ENCODE measurements at regions of chr1 and their contacts with region 1.

Region 1: GRCh38 chr1:36385410-36386257 is at the start of gene STK40:
- DNase-seq: peak; percentile 88
- ATAC-seq: peak; percentile 83
- H3K4me3 Mint-ChIP-seq: peak within 1 kb of the TSS; percentile 91
- H3K27ac Mint-ChIP-seq: peak within 1 kb of the TSS; percentile 100
- H3K4me1 Mint-ChIP-seq: peaks cover 88% of the 10 kb centered on the region
- H3K27me3 Mint-ChIP-seq: no peaks in the 10 kb centered on the region
- CTCF ChIP-seq: no peak
- total RNA-seq, gene STK40: 62.7 and 63.7 TPM in 2 replicates

Region 2: DNA sequence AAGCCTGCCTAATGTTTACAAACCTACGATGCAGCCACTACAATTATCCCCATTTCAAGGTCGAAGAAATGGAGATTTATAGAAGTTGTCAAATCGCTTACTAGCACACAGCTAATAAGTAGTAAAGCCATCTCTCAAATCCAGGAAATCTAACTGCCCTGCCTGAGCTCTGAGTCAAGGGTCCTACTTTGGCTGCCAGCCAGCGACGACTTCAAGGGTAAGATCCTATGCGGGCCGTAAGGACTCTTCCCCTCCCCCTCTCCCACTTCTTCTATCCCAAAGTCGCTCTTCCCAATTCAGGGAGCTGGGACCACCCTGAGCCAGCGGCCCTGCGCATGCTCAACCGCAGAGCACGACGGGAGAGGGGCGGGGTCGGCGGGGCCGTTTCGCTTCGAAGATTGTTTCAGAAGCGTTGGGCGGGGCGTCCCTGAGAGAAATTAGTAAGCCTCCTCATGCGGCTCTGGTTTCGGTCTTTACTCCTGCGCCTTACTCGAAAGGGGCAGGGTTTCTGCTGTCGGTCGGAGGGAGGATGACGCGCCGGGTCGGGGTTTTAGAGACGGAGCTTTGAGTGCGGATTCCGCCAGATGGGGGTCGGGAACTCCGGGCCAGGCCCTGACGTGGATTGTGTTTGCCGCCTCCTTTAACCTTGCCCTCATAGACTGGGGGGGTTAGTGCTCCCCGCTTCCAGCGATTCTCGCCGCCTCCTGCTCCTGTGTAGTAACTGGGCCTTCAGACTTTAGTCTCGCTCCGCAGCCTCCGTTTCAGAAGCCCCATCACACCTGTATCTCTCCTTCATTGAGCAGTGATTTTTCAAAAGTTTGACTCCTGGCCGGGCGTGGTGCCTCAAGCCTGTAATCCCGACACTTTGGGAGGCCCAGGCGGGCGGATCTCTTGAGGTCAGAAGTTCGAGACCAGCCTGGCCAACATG is 1306.4 kb before region 1 on chr1 and contains the start of gene ZMYM1:
- CTCF ChIA-PET with region 1: no interaction called
- POLR2A ChIA-PET with region 1: no interaction called
- intact Hi-C with region 1: loop called (anchors 5 kb)
- DNase-seq: peak; percentile 88
- ATAC-seq: peak; percentile 96
- H3K4me3 Mint-ChIP-seq: peak within 1 kb of the TSS; percentile 95
- H3K27ac Mint-ChIP-seq: peak within 1 kb of the TSS; percentile 98
- H3K4me1 Mint-ChIP-seq: peaks cover 21% of the 10 kb centered on the region
- H3K27me3 Mint-ChIP-seq: peaks cover 4% of the 10 kb centered on the region
- CTCF ChIP-seq: no peak
- total RNA-seq, gene ZMYM1: 7.4 and 9.0 TPM in 2 replicates

Region 3: DNA sequence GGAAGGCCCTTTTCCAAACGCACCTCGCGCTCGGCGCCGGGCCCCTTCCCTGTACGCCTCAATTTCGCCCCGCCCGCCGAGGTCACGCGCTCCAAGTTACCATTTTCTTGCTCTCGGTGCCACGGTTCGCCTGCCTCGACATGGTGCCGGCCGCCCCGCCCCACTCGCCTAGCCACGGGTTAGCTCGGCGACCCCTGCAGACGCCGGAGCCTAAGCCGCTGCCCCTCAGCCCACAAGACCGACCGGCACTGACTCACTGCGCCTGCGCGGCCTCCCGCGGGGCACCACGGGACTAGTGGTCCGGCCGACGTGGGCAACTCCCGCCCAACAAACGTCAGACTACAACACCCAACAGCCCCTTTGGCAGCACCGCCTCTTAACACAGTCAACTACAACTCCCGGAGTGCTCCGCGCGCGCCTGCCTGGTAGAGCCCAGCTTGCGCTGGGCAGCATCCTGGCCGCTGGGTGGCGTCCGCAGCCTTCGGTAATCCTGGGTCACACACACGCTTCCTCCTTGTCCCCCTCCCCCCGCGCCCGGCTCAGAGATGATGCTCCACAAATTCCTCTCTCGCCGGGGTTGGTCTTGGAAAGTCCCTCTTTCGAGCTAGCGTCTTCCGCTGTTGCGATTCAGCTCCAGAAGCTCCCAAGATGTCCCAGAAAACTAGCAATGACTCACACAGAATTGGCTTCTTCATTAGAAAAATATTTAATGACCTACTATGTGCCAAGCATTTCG is 236.2 kb before region 1 on chr1 and contains the start of gene TRAPPC3:
- CTCF ChIA-PET with region 1: no interaction called
- POLR2A ChIA-PET with region 1: interaction called, 18 read pairs
- intact Hi-C with region 1: loop called (anchors 5 kb)
- DNase-seq: peak; percentile 96
- ATAC-seq: peak; percentile 89
- H3K4me3 Mint-ChIP-seq: peak within 1 kb of the TSS; percentile 94
- H3K27ac Mint-ChIP-seq: peak within 1 kb of the TSS; percentile 95
- H3K4me1 Mint-ChIP-seq: peaks cover 55% of the 10 kb centered on the region
- H3K27me3 Mint-ChIP-seq: no peaks in the 10 kb centered on the region
- CTCF ChIP-seq: no peak
- total RNA-seq, gene TRAPPC3: 45.3 and 48.5 TPM in 2 replicates

Region 4: DNA sequence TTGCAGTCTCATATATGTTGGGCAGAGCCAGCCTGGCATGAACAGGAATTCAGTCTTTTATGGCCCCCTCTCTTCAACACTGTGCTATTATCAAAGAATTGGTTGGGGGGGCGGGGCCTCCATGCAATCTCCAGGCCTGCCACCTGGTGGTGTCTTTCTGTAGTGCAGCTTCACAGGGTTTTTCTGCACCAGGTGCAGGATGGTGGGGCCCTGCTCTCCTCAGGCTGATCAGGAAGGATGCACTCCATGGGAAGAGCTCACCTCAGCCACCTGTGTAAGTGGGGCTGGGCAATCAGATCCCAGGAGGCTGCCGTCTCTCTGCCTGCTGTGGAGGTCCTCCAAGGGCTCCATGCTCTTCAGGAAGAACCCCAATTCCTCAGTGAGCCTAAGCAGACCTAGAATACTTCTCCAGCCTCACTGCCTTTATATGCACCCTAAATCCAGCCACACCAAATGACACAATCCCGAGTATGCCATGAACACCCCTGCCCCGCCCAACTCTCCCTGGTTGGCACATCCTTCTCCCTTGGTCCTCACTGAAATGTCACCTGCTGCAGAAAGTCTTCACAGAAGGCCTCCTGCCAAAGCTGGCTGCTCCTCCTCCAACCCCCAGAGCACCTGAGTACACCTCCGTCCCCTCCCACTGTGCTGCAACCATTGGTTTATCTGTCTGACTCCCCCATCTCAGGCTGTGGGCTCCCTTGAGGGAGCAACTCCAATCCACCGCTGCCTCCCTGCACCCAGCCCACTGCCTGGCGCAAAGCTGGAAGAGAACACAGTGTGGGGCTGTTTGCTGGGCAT is 16.4 kb before region 1 on chr1:
- CTCF ChIA-PET with region 1: interaction called, 13 read pairs
- POLR2A ChIA-PET with region 1: interaction called, 34 read pairs
- intact Hi-C with region 1: loop called (anchors 1 kb)
- DNase-seq: peak; percentile 77
- ATAC-seq: peak; percentile 64
- H3K4me3 Mint-ChIP-seq: peak overlapping the region; percentile 28
- H3K27ac Mint-ChIP-seq: peak overlapping the region; percentile 93
- H3K4me1 Mint-ChIP-seq: peaks cover 84% of the 10 kb centered on the region
- H3K27me3 Mint-ChIP-seq: no peaks in the 10 kb centered on the region
- CTCF ChIP-seq: no peak

Region 5: GRCh38 chr1:36420836-36421664 is 35.4 kb after region 1 on chr1:
- CTCF ChIA-PET with region 1: interaction called, 4 read pairs
- POLR2A ChIA-PET with region 1: interaction called, 9 read pairs
- intact Hi-C with region 1: loop called (anchors 1 kb)
- DNase-seq: peak; percentile 85
- ATAC-seq: peak; percentile 100
- H3K4me3 Mint-ChIP-seq: peak overlapping the region; percentile 20
- H3K27ac Mint-ChIP-seq: peak overlapping the region; percentile 56
- H3K4me1 Mint-ChIP-seq: peaks cover 7% of the 10 kb centered on the region
- H3K27me3 Mint-ChIP-seq: no peaks in the 10 kb centered on the region
- CTCF ChIP-seq: peak; percentile 44

Region 6: DNA sequence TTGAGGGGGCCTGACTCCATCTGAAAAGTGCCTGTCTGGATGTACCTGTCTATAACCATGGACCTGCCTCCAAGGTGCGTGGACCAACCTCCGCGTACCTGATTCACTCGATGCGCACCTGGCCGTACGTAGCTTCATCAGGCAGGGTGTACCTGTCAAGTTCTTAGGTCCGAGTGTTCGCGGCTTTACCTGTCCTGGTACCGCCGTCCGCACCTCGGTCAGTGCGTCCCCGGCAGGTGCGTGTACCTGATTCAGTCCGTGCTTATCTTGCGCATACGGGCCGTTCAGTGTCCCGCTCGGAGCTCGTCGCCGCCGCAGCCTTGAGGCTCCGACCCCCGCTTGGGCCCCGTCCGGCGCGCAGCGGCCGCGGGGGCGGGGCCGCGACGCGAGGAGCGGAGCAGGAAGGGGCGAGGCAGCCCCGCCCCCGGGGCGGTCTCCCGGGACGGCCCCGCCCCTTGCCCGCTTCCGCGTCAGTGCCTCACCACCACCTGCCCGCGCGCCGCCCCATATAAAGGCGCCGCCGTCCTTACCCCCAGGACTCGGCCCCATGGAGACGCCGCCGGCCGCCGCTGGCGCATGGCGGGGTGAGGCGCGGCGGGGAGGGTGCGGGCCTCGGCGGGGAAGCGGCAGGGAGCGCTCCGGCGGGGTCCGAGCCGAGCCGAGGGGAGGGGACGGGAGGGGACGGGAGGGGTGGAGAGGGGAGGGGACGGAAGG is 1088.6 kb after region 1 on chr1 and contains the start of gene ZC3H12A:
- CTCF ChIA-PET with region 1: no interaction called
- POLR2A ChIA-PET with region 1: interaction called, 9 read pairs
- intact Hi-C with region 1: loop called (anchors 1 kb)
- DNase-seq: peak; percentile 98
- ATAC-seq: peak; percentile 65
- H3K4me3 Mint-ChIP-seq: peak within 1 kb of the TSS; percentile 99
- H3K27ac Mint-ChIP-seq: peak within 1 kb of the TSS; percentile 92
- H3K4me1 Mint-ChIP-seq: peaks cover 36% of the 10 kb centered on the region
- H3K27me3 Mint-ChIP-seq: peaks cover 6% of the 10 kb centered on the region
- CTCF ChIP-seq: no peak
- total RNA-seq, gene ZC3H12A: 140 and 145 TPM in 2 replicates